ENCODE measurements at regions of chr10 and their contacts with region 1.

Region 1: GRCh38 chr10:56360967-56361612 is at the start of gene ZWINT:
- DNase-seq: peak; percentile 99
- H3K4me3 ChIP-seq: peak within 1 kb of the TSS; percentile 86 to 98 (median 93)
- H3K27ac ChIP-seq: peak within 1 kb of the TSS; percentile 51
- H3K4me1 ChIP-seq: peaks cover 13% of the 10 kb centered on the region
- H3K27me3 ChIP-seq: no peaks in the 10 kb centered on the region
- CTCF ChIP-seq: no peak
- POLR2A ChIP-seq: peak; percentile 70
- total RNA-seq, gene ZWINT: 69.6 and 76.4 TPM in 2 replicates

Region 2: DNA sequence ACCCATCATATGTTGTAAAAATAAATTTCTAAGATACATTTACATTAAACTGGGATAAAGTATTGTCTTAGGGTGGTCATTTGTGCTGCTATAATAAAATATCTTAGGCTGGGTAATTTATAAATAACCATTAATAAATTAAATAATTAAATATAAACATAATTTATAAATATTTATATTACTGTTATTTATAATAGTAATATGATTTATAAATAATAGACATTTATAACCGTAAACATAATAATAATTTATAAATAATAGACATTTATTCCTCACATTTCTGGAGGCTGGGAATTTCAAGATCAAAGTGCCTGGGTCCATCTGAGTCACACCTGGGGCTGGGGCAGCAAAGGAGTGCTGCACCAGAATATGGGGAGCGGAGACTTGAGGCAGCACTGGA is 31.1 kb before region 1 on chr10:
- CTCF ChIA-PET with region 1: no interaction called
- POLR2A ChIA-PET with region 1: no interaction called
- dilution Hi-C with region 1: no loop called
- intact Hi-C with region 1: no loop called
- DNase-seq: no peak
- H3K4me3 ChIP-seq: no peak overlapping the region
- H3K27ac ChIP-seq: no peak overlapping the region
- H3K4me1 ChIP-seq: no peaks in the 10 kb centered on the region
- H3K27me3 ChIP-seq: no peaks in the 10 kb centered on the region
- CTCF ChIP-seq: no peak
- POLR2A ChIP-seq: no peak

Region 3: DNA sequence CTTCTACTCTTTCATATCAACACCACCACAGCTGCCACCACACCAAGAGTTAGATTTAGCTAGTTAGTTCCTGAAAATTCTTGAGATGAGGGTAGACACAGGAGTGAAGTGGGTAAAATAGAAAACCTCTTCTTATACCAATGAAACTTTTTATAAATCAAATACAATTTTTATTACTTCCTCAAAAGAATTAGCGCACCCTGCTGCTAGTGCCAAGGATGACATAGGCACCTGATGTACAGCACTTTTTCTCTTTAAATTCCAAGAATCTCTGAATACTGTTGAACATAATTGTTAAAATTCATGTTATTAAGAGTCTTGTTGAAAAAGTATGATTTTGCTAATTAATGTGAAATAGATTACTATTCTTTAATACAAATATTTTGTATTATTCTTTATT is 11.5 kb before region 1 on chr10:
- CTCF ChIA-PET with region 1: interaction called, 11 read pairs
- POLR2A ChIA-PET with region 1: no interaction called
- dilution Hi-C with region 1: no loop called
- intact Hi-C with region 1: no loop called
- DNase-seq: no peak
- H3K4me3 ChIP-seq: no peak overlapping the region
- H3K27ac ChIP-seq: no peak overlapping the region
- H3K4me1 ChIP-seq: peaks cover 8% of the 10 kb centered on the region
- H3K27me3 ChIP-seq: no peaks in the 10 kb centered on the region
- CTCF ChIP-seq: no peak
- POLR2A ChIP-seq: no peak

Measured in endothelial cell of umbilical vein (primary cell).